Left ventricle myocardium superior (tissue), 1 donor: ENCODE measurements at regions of chr3 and their contacts with region 1.

Region 1: DNA sequence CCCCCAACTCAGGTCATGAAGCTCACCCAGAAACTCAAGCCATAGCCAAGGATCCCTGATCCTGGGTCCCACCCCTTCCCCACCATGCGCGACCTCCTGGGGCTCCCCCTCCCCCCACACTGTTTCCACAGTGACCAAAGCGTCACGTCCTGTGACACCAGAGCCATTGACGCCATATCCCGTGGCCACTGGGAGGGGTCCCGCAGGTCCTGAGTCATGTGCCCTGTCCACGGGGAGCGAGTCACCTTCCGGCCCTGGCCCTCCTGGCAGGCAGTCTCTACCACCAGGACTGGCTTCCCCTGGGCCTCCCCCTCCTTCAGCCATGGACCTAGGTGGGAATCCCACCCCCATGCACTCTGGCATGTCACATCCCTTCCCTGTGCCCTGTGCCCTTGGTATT is 15.6 kb downstream of the SEMA3F start:
- DNase-seq: peak; percentile 66
- ATAC-seq: peak; percentile 13

Region 2: GRCh38 chr3:50154840-50155474 is 15.7 kb before region 1 on chr3 and contains the start of gene SEMA3F:
- intact Hi-C with region 1: loop called (anchors 1 kb)
- DNase-seq: peak; percentile 83
- ATAC-seq: peak; percentile 92
- total RNA-seq, gene SEMA3F: 11.4 TPM